Naive thymus-derived CD4-positive, alpha-beta T cell (primary cell): ENCODE measurements at regions of chr13 and their contacts with region 1.

Region 1: GRCh38 chr13:94549232-94550061 is 46.5 kb downstream of the TGDS start:
- DNase-seq: peak; percentile 81 to 95 (median 92)
- ATAC-seq: peak; percentile 94
- H3K4me3 ChIP-seq: peak overlapping the region; percentile 88
- H3K4me3 Mint-ChIP-seq: peak overlapping the region; percentile 88 to 100 (median 94)
- H3K27ac ChIP-seq: peak overlapping the region; percentile 95
- H3K27ac Mint-ChIP-seq: peak overlapping the region; percentile 96 to 100 (median 99)
- H3K4me1 ChIP-seq: peaks cover 8 to 14% of the 10 kb centered on the region in 2 donors
- H3K4me1 Mint-ChIP-seq: peaks cover 15 to 44% (median 30%) of the 10 kb centered on the region in 7 donors
- H3K27me3 ChIP-seq: no peaks in the 10 kb centered on the region
- H3K27me3 Mint-ChIP-seq: peaks cover 0 to 16% (median 5%) of the 10 kb centered on the region in 5 donors

Region 2: GRCh38 chr13:94435604-94436226 is 113.7 kb before region 1 on chr13:
- CTCF ChIA-PET with region 1: no interaction called
- POLR2A ChIA-PET with region 1: no interaction called
- intact Hi-C with region 1: loop called (anchors 1 kb)
- DNase-seq: peak in 7 of 9 donors; percentile 18 to 63 (median 50)
- ATAC-seq: peak; percentile 73
- H3K4me3 ChIP-seq: no peak overlapping the region
- H3K4me3 Mint-ChIP-seq: no peak overlapping the region
- H3K27ac ChIP-seq: no peak overlapping the region
- H3K27ac Mint-ChIP-seq: no peak overlapping the region
- H3K4me1 ChIP-seq: no peaks in the 10 kb centered on the region
- H3K4me1 Mint-ChIP-seq: peaks cover 0 to 16% (median 0%) of the 10 kb centered on the region in 7 donors
- H3K27me3 ChIP-seq: no peaks in the 10 kb centered on the region
- H3K27me3 Mint-ChIP-seq: peaks cover 0 to 3% (median 0%) of the 10 kb centered on the region in 5 donors

Region 3: DNA sequence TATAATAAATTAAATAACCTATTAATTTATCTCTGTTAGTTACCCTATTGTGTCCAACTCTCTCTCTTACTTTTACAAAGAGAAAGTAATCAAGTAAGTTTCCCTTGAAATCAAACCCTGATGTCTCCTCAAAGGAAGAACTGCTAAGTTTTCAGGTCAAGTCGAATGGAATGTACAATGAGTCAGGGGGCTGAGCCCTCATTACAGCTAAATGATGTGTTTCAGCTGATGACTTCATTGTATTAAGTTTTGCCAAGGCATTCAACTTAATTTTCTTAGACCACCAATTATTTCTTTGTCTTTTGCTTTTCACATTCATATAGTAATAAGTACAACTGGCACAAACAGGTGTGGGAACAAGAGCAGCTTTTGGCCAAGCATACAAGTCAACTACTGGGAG is 15.3 kb before region 1 on chr13:
- CTCF ChIA-PET with region 1: interaction called, 3 read pairs
- POLR2A ChIA-PET with region 1: interaction called, 12 read pairs
- intact Hi-C with region 1: no loop called
- DNase-seq: no peak
- ATAC-seq: no peak
- H3K4me3 ChIP-seq: no peak overlapping the region
- H3K4me3 Mint-ChIP-seq: no peak overlapping the region
- H3K27ac ChIP-seq: no peak overlapping the region
- H3K27ac Mint-ChIP-seq: no peak overlapping the region
- H3K4me1 ChIP-seq: peaks cover 0 to 12% of the 10 kb centered on the region in 2 donors
- H3K4me1 Mint-ChIP-seq: peaks cover 5 to 35% (median 18%) of the 10 kb centered on the region in 7 donors
- H3K27me3 ChIP-seq: no peaks in the 10 kb centered on the region
- H3K27me3 Mint-ChIP-seq: peaks cover 0 to 8% (median 0%) of the 10 kb centered on the region in 5 donors

Region 4: GRCh38 chr13:94601446-94602431 is 52.3 kb after region 1 on chr13 and contains the start of gene GPR180:
- CTCF ChIA-PET with region 1: interaction called, 7 read pairs
- POLR2A ChIA-PET with region 1: interaction called, 32 read pairs
- intact Hi-C with region 1: loop called (anchors 1 kb)
- DNase-seq: peak; percentile 67 to 92 (median 88)
- ATAC-seq: peak; percentile 99
- H3K4me3 ChIP-seq: peak within 1 kb of the TSS; percentile 58
- H3K4me3 Mint-ChIP-seq: peak within 1 kb of the TSS; percentile 79 to 90 (median 86)
- H3K27ac ChIP-seq: peak within 1 kb of the TSS; percentile 75
- H3K27ac Mint-ChIP-seq: peak within 1 kb of the TSS; percentile 82 to 90 (median 87)
- H3K4me1 ChIP-seq: peaks cover 0 to 10% of the 10 kb centered on the region in 2 donors
- H3K4me1 Mint-ChIP-seq: peaks cover 16 to 45% (median 32%) of the 10 kb centered on the region in 7 donors
- H3K27me3 ChIP-seq: no peaks in the 10 kb centered on the region
- H3K27me3 Mint-ChIP-seq: no peaks in the 10 kb centered on the region
- total RNA-seq, gene GPR180: 1.8 to 7.0 (median 5.4) TPM

Region 5: GRCh38 chr13:95239283-95239682 is 689.8 kb after region 1 on chr13:
- CTCF ChIA-PET with region 1: no interaction called
- POLR2A ChIA-PET with region 1: no interaction called
- intact Hi-C with region 1: no loop called
- DNase-seq: no peak
- ATAC-seq: no peak
- H3K4me3 ChIP-seq: no peak overlapping the region
- H3K4me3 Mint-ChIP-seq: no peak overlapping the region
- H3K27ac ChIP-seq: no peak overlapping the region
- H3K27ac Mint-ChIP-seq: no peak overlapping the region
- H3K4me1 ChIP-seq: no peaks in the 10 kb centered on the region
- H3K4me1 Mint-ChIP-seq: peaks cover 2 to 8% (median 7%) of the 10 kb centered on the region in 7 donors
- H3K27me3 ChIP-seq: no peaks in the 10 kb centered on the region
- H3K27me3 Mint-ChIP-seq: no peaks in the 10 kb centered on the region

Region 6: GRCh38 chr13:95301183-95301967 is 751.9 kb after region 1 on chr13 and contains the start of gene ABCC4:
- CTCF ChIA-PET with region 1: no interaction called
- POLR2A ChIA-PET with region 1: no interaction called
- intact Hi-C with region 1: loop called in 1 of 2 experiments (anchors 2 kb)
- DNase-seq: peak; percentile 22 to 78 (median 48)
- ATAC-seq: peak; percentile 86
- H3K4me3 ChIP-seq: peak within 1 kb of the TSS; percentile 50
- H3K4me3 Mint-ChIP-seq: peak within 1 kb of the TSS; percentile 84 to 96 (median 87)
- H3K27ac ChIP-seq: peak within 1 kb of the TSS; percentile 41
- H3K27ac Mint-ChIP-seq: peak within 1 kb of the TSS in 8 of 9 donors; percentile 6 to 86 (median 66)
- H3K4me1 ChIP-seq: peaks cover 0 to 5% of the 10 kb centered on the region in 2 donors
- H3K4me1 Mint-ChIP-seq: peaks cover 7 to 41% (median 27%) of the 10 kb centered on the region in 7 donors
- H3K27me3 ChIP-seq: no peaks in the 10 kb centered on the region
- H3K27me3 Mint-ChIP-seq: peaks cover 0 to 15% (median 0%) of the 10 kb centered on the region in 5 donors
- total RNA-seq, gene ABCC4: 5.8 to 9.2 (median 7.5) TPM